Adrenal gland (tissue), 19 donors: ENCODE measurements at regions of chrX and their contacts with region 1.

Region 1: GRCh38 chrX:134764212-134764785 is 106.0 kb upstream of the PLAC1 start:
- DNase-seq: no peak
- H3K4me3 ChIP-seq: no peak overlapping the region
- H3K27ac ChIP-seq: no peak overlapping the region
- H3K4me1 ChIP-seq: no peaks in the 10 kb centered on the region
- H3K27me3 ChIP-seq: no peaks in the 10 kb centered on the region
- CTCF ChIP-seq: no peak
- POLR2A ChIP-seq: no peak

Region 2: GRCh38 chrX:134484039-134484438 is 280.3 kb before region 1 on chrX:
- intact Hi-C with region 1: loop called in 1 of 2 experiments (anchors 10 kb)
- DNase-seq: no peak
- H3K4me3 ChIP-seq: no peak overlapping the region
- H3K27ac ChIP-seq: no peak overlapping the region
- H3K4me1 ChIP-seq: no peaks in the 10 kb centered on the region
- H3K27me3 ChIP-seq: no peaks in the 10 kb centered on the region
- CTCF ChIP-seq: peak; percentile 60 to 71 (median 66)
- POLR2A ChIP-seq: no peak

Region 3: GRCh38 chrX:134821370-134821769 is 57.1 kb after region 1 on chrX:
- intact Hi-C with region 1: no loop called
- DNase-seq: peak in 5 of 7 donors; percentile 22 to 54 (median 28)
- H3K4me3 ChIP-seq: no peak overlapping the region
- H3K27ac ChIP-seq: peak overlapping the region in 1 of 5 donors; percentile 29
- H3K4me1 ChIP-seq: no peaks in the 10 kb centered on the region
- H3K27me3 ChIP-seq: peaks cover 4% of the 10 kb centered on the region
- CTCF ChIP-seq: peak in 1 of 6 experiments; percentile 13
- POLR2A ChIP-seq: no peak

Region 4: DNA sequence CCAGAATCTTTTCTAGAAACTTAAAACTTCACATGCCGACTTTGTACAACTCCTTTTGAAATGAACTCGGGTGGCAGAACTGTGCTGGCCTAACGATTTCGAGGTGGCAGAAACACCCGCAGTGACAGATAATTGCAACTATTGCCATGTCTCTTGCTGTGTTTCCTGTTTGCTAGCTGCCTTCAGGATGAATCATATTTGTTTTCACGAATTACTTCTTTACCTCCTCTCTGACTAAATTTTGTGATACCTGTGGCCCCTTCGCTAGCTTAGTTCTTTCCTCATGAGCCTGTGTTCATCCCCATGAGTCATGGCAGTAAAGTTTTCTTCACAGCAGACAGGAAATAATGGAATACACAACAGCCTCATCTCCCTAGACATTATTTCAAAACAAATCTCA is 121.9 kb after region 1 on chrX:
- intact Hi-C with region 1: no loop called
- DNase-seq: no peak
- H3K4me3 ChIP-seq: no peak overlapping the region
- H3K27ac ChIP-seq: no peak overlapping the region
- H3K4me1 ChIP-seq: no peaks in the 10 kb centered on the region
- H3K27me3 ChIP-seq: peaks cover 4% of the 10 kb centered on the region
- CTCF ChIP-seq: no peak
- POLR2A ChIP-seq: no peak